Right lobe of liver (tissue), 6 donors: ENCODE measurements at regions of chr5 and their contacts with region 1.

Region 1: DNA sequence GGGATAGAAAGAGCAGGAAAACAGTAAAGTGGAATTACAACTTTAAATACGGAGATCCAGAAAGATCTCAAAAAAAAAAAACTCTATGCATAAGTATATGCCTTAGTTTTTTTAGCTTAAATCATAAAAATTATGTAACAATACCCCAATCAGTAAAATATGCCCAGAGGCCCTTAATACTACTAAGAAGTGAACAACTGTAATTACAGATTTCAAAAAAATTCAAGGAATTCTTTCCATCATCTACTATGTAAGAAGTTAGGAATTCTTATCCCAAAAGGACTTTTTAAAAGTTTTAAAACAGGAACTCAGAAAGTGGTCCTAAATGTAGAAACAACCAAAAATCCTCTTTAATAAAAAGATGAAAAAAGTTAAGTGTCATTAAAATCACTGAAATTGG is 111.3 kb downstream of the SSBP2 start:
- DNase-seq: no peak
- ATAC-seq: no peak
- H3K4me3 ChIP-seq: no peak overlapping the region
- H3K27ac ChIP-seq: no peak overlapping the region
- H3K4me1 ChIP-seq: no peaks in the 10 kb centered on the region
- H3K27me3 ChIP-seq: no peaks in the 10 kb centered on the region
- CTCF ChIP-seq: no peak
- POLR2A ChIP-seq: no peak

Region 2: GRCh38 chr5:81696418-81697397 is 57.2 kb after region 1 on chr5:
- intact Hi-C with region 1: loop called in 1 of 2 experiments (anchors 5 kb)
- DNase-seq: no peak
- ATAC-seq: no peak
- H3K4me3 ChIP-seq: no peak overlapping the region
- H3K27ac ChIP-seq: no peak overlapping the region
- H3K4me1 ChIP-seq: no peaks in the 10 kb centered on the region
- H3K27me3 ChIP-seq: no peaks in the 10 kb centered on the region
- CTCF ChIP-seq: no peak
- POLR2A ChIP-seq: no peak